Cardiac septum (tissue), 1 donor: ENCODE measurements at regions of chr6 and their contacts with region 1.

Region 1: DNA sequence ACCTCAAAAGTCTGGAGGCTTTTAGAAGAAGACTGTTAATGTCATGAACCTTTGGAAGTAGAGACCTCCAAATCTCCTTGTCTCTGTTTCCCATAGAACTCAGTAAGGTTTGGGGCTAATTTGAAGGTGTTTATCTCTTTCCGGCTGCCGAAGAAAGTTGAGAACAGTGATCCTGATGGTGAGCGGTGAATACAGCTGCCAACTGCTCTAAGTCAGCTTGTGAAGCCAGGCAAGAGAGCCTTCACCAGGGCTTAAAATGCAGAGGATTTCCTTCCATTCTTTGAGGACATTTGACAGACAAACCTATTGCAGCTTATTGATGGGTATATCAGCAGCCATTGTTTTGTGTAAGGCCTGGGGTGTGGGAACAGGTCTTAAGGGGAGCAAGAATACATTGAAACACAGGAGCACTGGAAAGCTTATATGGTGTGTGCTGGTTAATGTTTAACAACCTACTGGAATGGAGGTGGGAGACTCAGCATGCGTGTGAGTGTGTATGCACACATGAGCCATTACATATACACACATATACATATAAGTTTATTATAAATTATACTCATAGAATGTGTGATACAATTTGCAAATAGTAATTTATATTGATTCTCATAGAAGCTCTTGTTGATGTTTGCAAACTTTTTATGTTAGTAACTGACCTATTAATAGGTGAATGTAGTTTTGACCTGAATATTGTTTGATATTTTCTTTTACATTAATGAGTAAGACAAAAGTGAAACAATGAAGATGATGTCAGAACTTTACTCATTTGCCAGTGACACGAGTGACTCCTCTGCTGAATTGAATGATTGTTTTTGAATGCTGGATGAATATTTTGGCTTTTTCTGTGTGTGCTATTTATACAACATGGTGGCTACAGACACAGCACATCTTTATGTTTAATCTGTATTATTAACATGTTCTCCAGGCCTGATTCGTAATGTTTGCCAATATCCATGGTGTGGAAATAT is 18.1 kb downstream of the PLEKHG1 start:
- DNase-seq: no peak

Region 2: GRCh38 chr6:150448221-150448620 is 169.6 kb before region 1 on chr6:
- intact Hi-C with region 1: no loop called
- DNase-seq: no peak

Region 3: DNA sequence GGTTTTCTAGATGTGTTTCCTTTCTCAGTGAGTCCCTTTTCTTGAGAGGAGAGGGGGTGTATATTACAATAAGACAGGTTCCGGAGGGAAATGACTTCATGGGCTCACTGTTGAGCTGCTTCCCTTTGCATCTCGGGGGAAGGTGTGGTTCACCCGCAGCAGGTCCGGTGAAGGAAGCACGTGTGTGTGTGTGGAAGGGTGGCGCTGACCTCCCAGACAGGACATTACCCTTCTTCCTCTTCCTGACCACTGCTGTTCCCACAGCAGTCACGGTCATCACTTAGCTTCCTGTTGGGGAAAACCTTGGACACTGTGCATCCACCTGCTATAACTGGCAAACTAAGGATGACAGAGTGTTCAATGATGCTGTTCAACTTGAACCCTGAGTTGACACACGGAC is 65.5 kb after region 1 on chr6:
- intact Hi-C with region 1: loop called (anchors 5 kb)
- DNase-seq: no peak